A673 (cell line): ENCODE measurements at regions of chr11 and their contacts with region 1.

Region 1: GRCh38 chr11:73784734-73785133 is 2.9 kb upstream of the MRPL48 start:
- DNase-seq: no peak
- H3K4me3 ChIP-seq: no peak overlapping the region
- H3K27ac ChIP-seq: peak overlapping the region; percentile 65
- H3K4me1 ChIP-seq: peaks cover 29% of the 10 kb centered on the region
- H3K27me3 ChIP-seq: no peaks in the 10 kb centered on the region
- CTCF ChIP-seq: no peak

Region 2: DNA sequence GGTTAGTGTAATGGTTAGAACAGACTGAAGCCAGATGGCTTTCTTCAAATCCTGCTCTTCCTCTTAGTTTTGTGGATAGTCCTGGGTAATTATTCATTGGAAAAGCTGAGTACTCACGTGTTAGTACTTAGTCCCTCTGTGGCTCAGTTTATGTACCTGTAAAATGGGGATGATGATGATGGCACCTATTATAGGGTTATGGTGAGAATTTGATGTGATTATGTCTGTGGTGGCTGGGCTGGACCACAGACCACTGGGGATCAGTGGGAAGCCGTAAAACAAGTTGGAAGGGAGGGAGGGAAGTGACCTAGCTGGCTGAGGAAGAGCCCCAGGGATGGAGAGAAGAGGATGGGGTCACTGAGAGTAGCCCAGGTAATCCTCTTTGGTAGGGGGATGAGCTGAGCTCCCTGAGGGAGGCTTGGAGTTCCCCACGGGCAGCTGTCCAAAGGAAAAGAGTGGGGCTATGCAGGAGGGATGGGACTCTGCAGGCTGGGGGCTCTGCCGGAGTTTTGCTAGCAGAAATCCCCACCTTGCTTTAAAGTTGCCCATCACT is 456.8 kb before region 1 on chr11:
- CTCF ChIA-PET with region 1: no interaction called
- POLR2A ChIA-PET with region 1: interaction called, 11 read pairs
- intact Hi-C with region 1: no loop called
- DNase-seq: no peak
- H3K4me3 ChIP-seq: no peak overlapping the region
- H3K27ac ChIP-seq: no peak overlapping the region
- H3K4me1 ChIP-seq: peaks cover 24% of the 10 kb centered on the region
- H3K27me3 ChIP-seq: no peaks in the 10 kb centered on the region
- CTCF ChIP-seq: no peak